Activated naive CD4-positive, alpha-beta T cell treated with anti-CD3 and anti-CD28 coated beads for 36 hours (primary cell): ENCODE measurements at regions of chr17 and their contacts with region 1.

Region 1: GRCh38 chr17:38557836-38558727 is 47.7 kb downstream of the SRCIN1 start:
- DNase-seq: peak; percentile 92
- H3K4me3 Mint-ChIP-seq: peak overlapping the region; percentile 89
- H3K27ac Mint-ChIP-seq: no peak overlapping the region
- H3K4me1 Mint-ChIP-seq: peaks cover 21% of the 10 kb centered on the region
- H3K27me3 Mint-ChIP-seq: peaks cover 26% of the 10 kb centered on the region

Region 2: GRCh38 chr17:37848690-37849616 is 709.1 kb before region 1 on chr17:
- CTCF ChIA-PET with region 1: no interaction called
- intact Hi-C with region 1: no loop called
- DNase-seq: peak; percentile 56
- H3K4me3 Mint-ChIP-seq: no peak overlapping the region
- H3K27ac Mint-ChIP-seq: no peak overlapping the region
- H3K4me1 Mint-ChIP-seq: peaks cover 20% of the 10 kb centered on the region
- H3K27me3 Mint-ChIP-seq: peaks cover 6% of the 10 kb centered on the region

Region 3: GRCh38 chr17:38403491-38403890 is 154.6 kb before region 1 on chr17:
- CTCF ChIA-PET with region 1: no interaction called
- intact Hi-C with region 1: no loop called
- DNase-seq: no peak
- H3K4me3 Mint-ChIP-seq: no peak overlapping the region
- H3K27ac Mint-ChIP-seq: no peak overlapping the region
- H3K4me1 Mint-ChIP-seq: no peaks in the 10 kb centered on the region
- H3K27me3 Mint-ChIP-seq: no peaks in the 10 kb centered on the region

Region 4: GRCh38 chr17:38464723-38465390 is 93.2 kb before region 1 on chr17:
- CTCF ChIA-PET with region 1: no interaction called
- intact Hi-C with region 1: no loop called
- DNase-seq: no peak
- H3K4me3 Mint-ChIP-seq: no peak overlapping the region
- H3K27ac Mint-ChIP-seq: no peak overlapping the region
- H3K4me1 Mint-ChIP-seq: no peaks in the 10 kb centered on the region
- H3K27me3 Mint-ChIP-seq: no peaks in the 10 kb centered on the region

Region 5: DNA sequence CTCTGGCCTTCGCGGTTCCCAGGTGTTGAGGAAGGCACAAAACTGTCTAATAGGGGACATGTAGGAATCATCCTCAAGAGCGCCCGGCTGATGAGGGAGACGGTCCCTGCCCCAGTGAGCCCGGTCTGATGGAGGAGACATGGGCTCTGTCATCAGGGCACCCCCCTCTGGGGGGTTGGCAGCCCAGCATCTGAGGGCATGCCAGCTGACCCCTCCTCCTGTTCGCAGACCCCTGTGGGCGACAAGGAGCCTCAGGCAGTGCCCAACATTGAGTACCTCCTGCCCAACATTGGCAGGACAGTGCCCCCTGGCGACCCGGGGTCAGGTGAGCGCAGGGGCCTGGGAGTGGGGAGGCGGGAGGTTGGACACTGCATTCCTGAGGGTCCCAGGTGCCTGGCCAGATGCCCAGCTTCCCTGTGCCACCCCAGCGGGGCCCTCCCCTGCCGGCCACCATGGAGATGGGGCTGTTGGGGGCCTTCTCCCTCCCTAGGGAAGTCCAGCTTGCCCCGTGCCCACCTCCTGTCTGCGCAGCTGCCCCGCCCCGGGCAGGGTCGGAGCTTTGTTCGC is 59.8 kb before region 1 on chr17:
- CTCF ChIA-PET with region 1: no interaction called
- intact Hi-C with region 1: loop called (anchors 2 kb)
- DNase-seq: no peak
- H3K4me3 Mint-ChIP-seq: no peak overlapping the region
- H3K27ac Mint-ChIP-seq: no peak overlapping the region
- H3K4me1 Mint-ChIP-seq: no peaks in the 10 kb centered on the region
- H3K27me3 Mint-ChIP-seq: no peaks in the 10 kb centered on the region

Region 6: GRCh38 chr17:38584350-38584925 is 26.4 kb after region 1 on chr17:
- CTCF ChIA-PET with region 1: interaction called, 171 read pairs
- intact Hi-C with region 1: loop called (anchors 1 kb)
- DNase-seq: peak; percentile 71
- H3K4me3 Mint-ChIP-seq: no peak overlapping the region
- H3K27ac Mint-ChIP-seq: no peak overlapping the region
- H3K4me1 Mint-ChIP-seq: peaks cover 4% of the 10 kb centered on the region
- H3K27me3 Mint-ChIP-seq: peaks cover 57% of the 10 kb centered on the region

Region 7: GRCh38 chr17:38605888-38606645 is 48.0 kb after region 1 on chr17 and contains the start of gene SRCIN1:
- CTCF ChIA-PET with region 1: interaction called, 40 read pairs
- intact Hi-C with region 1: loop called (anchors 1 kb)
- DNase-seq: peak; percentile 52
- H3K4me3 Mint-ChIP-seq: peak within 1 kb of the TSS; percentile 58
- H3K27ac Mint-ChIP-seq: no peak within 1 kb of the TSS
- H3K4me1 Mint-ChIP-seq: peaks cover 13% of the 10 kb centered on the region
- H3K27me3 Mint-ChIP-seq: peaks cover 65% of the 10 kb centered on the region
- total RNA-seq, gene SRCIN1: 0.67 to 0.94 TPM

Region 8: DNA sequence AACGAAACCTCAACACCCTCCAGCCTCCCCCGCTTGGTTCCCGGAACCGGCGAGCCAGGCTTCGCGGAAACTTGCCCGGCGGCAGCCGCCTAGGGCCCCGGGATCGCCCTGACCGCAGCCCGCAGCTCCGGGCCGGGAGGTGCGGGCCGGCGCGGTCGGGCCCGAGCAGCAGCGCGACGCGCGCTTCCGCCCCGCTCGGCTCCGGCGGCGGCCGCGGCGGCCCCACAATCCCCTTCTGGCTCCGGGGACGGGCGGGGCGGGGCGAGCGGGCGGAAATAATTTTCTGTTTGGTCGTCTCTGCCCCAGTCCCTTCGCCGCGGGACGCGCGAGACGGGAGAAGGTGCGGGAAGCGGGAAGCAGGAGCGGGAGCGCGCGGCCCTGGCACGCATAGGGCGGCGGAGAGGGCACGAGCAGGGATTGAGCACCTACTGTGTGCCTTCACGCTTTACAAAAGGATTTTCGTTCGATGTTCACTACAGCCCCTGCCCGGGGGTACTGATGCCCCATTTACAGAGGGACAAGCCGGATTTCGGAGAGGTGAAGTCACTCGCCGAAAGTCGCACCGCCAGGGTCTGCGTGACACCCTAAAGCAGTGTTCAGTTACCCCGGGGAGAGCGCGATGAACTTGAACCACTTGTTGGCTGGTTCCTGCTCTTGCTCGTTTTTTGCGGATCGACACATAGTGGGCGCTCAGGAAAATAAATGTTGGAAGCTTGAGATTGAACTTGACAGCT is 144.3 kb after region 1 on chr17:
- CTCF ChIA-PET with region 1: no interaction called
- intact Hi-C with region 1: loop called (anchors 1 kb)
- DNase-seq: peak; percentile 92
- H3K4me3 Mint-ChIP-seq: peak overlapping the region; percentile 100
- H3K27ac Mint-ChIP-seq: peak overlapping the region; percentile 100
- H3K4me1 Mint-ChIP-seq: peaks cover 45% of the 10 kb centered on the region
- H3K27me3 Mint-ChIP-seq: no peaks in the 10 kb centered on the region

Region 9: GRCh38 chr17:38735161-38735997 is 177.3 kb after region 1 on chr17:
- CTCF ChIA-PET with region 1: interaction called, 14 read pairs
- intact Hi-C with region 1: loop called (anchors 2 kb)
- DNase-seq: peak; percentile 77
- H3K4me3 Mint-ChIP-seq: no peak overlapping the region
- H3K27ac Mint-ChIP-seq: peak overlapping the region; percentile 37
- H3K4me1 Mint-ChIP-seq: peaks cover 47% of the 10 kb centered on the region
- H3K27me3 Mint-ChIP-seq: no peaks in the 10 kb centered on the region

Region 10: GRCh38 chr17:38912221-38912813 is 354.2 kb after region 1 on chr17:
- CTCF ChIA-PET with region 1: no interaction called
- intact Hi-C with region 1: no loop called
- DNase-seq: peak; percentile 3
- H3K4me3 Mint-ChIP-seq: no peak overlapping the region
- H3K27ac Mint-ChIP-seq: no peak overlapping the region
- H3K4me1 Mint-ChIP-seq: peaks cover 10% of the 10 kb centered on the region
- H3K27me3 Mint-ChIP-seq: no peaks in the 10 kb centered on the region